ENCODE measurements at regions of chr15 and their contacts with region 1.

Region 1: GRCh38 chr15:35329521-35329961 is 216.4 kb downstream of the DPH6 start:
- DNase-seq: peak; percentile 61

Region 2: DNA sequence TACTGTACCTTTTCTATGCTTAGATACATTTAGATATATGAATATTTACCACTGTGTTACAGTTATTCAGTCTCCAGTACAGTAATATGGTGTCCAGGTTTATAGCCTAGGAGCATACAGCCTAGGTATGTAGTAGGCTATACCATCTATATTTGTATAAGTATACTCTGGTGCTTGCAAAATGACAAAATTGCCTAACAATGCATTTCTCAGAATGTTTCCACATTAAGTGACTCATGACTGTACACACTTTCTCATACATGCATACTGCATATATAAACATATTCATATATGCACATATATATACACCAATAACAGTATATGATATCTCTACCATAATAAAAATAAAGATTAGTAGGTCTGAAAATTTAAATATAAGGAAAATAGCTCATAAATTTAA is 47.2 kb after region 1 on chr15:
- in situ Hi-C with region 1: no loop called
- DNase-seq: no peak

Region 3: DNA sequence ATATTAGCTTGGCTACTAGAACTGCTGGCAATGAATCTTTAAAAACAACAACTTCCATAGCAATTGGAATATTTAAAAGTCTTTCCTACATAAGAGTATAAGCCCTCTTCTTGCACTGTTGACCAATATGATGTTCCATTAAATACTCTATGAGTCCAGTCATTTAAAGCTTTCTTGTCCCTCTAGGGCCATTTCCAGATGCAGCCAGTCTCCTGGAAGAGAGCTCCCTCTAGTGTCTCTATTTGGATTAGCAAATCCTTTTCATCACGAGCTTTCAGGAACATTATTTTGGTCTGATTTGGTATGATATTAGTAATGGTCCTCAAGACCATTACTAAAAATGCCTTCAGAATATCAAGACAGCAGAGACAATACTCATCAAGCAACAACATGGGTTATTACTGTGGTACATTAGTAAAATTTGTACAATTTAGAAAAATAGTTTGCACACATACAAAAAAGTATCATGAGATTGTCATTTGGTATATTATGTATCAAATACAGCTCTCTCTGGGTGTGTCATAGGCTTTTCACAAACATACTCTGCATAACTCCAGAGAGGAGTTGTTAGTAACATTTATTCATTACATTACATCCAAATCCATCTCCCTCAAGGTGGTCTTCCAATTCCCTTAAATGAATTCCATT is 115.1 kb after region 1 on chr15:
- in situ Hi-C with region 1: loop called (anchors 25 kb)
- DNase-seq: peak; percentile 64

Region 4: DNA sequence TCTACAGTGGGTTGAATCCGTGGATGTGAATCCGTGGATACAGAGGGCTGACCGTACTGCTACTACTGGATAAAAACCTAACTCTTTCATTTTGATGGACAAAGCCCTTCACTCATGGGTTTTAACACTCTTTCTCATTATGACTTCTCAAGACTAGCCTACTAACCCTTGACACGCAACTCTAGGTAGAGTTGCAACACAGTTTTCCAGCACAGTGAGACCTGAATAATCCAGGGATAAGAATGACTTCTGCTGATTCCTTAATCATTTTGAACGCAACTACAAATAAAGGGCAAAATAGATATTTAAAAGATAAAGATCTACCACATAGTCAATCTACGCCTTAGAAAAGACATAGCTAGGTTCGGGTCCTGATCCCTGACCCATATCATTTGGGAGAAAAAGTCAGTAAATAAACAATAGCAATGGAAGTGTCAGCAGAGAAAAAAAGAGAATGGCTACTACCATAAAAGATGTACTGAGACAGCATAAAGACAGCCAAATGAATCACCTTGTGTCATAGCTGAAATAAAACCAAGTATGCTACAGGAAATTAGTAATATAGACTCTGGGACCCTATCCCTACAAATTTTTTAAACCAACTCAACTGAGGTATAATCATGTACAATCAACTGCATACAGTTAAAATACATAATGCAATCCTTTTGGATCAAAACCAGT is 128.8 kb after region 1 on chr15:
- in situ Hi-C with region 1: no loop called
- DNase-seq: no peak